ENCODE measurements at regions of chr6 and their contacts with region 1.

Region 1: DNA sequence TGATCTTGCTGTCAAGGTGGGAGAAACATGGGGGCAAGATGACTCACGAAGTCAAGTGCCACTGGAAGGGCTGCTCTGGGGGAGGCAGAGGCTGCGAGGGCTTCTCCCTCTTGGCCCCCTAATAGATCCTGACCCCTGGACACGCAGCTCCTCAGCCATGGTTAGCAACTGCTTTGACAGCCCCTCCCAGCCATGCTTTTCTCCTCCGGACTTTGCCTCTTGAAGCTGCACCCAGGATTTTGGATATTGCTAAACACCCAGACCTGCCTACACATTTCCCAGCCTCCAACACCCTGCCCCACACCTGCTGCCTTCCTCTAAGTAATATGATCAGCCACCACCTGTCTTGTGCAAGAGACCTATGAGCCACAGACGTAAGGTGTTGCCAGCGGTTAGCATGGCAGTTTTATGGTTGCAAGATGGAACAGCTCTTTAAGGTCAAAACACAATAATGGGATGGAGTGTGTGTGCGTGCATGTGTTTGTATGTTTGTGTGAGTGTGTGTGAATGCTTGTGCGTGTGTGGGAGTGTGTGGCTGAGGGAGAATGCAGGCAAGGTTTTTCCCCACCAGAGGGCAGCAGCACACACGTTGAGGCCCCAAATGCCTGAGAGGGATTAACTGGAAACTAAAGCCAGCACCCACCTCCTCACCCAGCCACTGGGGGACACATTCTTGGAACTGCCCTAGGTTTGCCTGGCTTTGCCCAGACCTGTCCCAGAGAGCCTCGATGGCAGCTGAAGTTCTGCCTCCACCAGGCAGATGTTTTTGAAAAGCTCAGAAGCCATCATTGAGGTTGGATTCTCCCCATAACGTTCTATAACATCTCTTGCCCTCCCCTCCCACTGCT is 2.5 kb downstream of the IP6K3 start:
- DNase-seq: peak; percentile 57
- ATAC-seq: peak; percentile 90
- H3K4me3 Mint-ChIP-seq: no peak overlapping the region
- H3K27ac Mint-ChIP-seq: no peak overlapping the region
- H3K4me1 Mint-ChIP-seq: peaks cover 2% of the 10 kb centered on the region
- H3K27me3 Mint-ChIP-seq: peaks cover 21% of the 10 kb centered on the region
- CTCF ChIP-seq: no peak

Region 2: DNA sequence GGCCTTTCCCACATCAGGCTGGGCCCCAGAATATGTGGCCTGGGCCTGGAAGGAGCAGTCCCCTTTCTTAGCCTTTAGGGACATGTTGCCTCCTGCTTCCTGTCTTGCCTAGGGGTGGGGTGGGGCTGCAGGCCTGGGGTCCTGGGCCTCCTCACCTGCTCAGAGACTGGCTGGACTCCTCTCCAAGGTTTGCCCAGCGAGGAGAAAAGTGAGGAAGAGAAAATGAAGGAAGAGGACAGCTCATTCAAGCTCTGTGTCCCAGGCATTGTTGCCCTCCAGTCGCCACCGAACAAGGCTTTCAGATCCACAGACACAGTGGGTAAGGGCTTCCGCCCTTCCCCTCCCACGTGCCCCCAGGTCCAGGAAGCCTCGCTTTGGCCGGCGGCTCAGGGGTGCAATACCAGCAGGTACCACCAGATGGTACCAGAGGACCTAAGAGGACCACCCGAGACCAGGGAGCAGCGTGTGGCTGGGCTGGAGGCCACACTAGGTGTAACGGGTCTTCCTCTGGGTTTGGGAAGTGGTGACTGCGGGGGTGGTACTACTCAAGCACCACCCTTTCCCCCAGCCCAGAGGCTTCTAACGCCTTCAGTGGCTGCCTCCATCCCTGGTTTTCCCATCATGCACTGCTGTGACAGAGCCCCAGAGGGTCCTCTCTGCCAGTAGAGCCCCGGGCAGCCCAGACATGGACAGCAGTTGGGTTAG is 158.7 kb before region 1 on chr6:
- CTCF ChIA-PET with region 1: interaction called, 8 read pairs
- POLR2A ChIA-PET with region 1: no interaction called
- intact Hi-C with region 1: loop called (anchors 1 kb)
- DNase-seq: peak; percentile 90
- ATAC-seq: peak; percentile 94
- H3K4me3 Mint-ChIP-seq: peak overlapping the region; percentile 61
- H3K27ac Mint-ChIP-seq: peak overlapping the region; percentile 93
- H3K4me1 Mint-ChIP-seq: peaks cover 31% of the 10 kb centered on the region
- H3K27me3 Mint-ChIP-seq: no peaks in the 10 kb centered on the region
- CTCF ChIP-seq: peak; percentile 96

Region 3: GRCh38 chr6:33711140-33712129 is 32.8 kb before region 1 on chr6 and contains the start of gene UQCC2:
- CTCF ChIA-PET with region 1: interaction called, 23 read pairs
- POLR2A ChIA-PET with region 1: interaction called, 3 read pairs
- intact Hi-C with region 1: loop called (anchors 1 kb)
- DNase-seq: peak; percentile 93
- ATAC-seq: peak; percentile 86
- H3K4me3 Mint-ChIP-seq: peak within 1 kb of the TSS; percentile 98
- H3K27ac Mint-ChIP-seq: peak within 1 kb of the TSS; percentile 99
- H3K4me1 Mint-ChIP-seq: peaks cover 29% of the 10 kb centered on the region
- H3K27me3 Mint-ChIP-seq: no peaks in the 10 kb centered on the region
- CTCF ChIP-seq: no peak
- total RNA-seq, gene UQCC2: 26.2 and 37.5 TPM in 2 replicates

Region 4: GRCh38 chr6:34027445-34027936 is 283.3 kb after region 1 on chr6:
- CTCF ChIA-PET with region 1: interaction called, 4 read pairs
- POLR2A ChIA-PET with region 1: no interaction called
- intact Hi-C with region 1: loop called (anchors 1 kb)
- DNase-seq: peak; percentile 57
- ATAC-seq: peak; percentile 65
- H3K4me3 Mint-ChIP-seq: no peak overlapping the region
- H3K27ac Mint-ChIP-seq: no peak overlapping the region
- H3K4me1 Mint-ChIP-seq: peaks cover 5% of the 10 kb centered on the region
- H3K27me3 Mint-ChIP-seq: peaks cover 5% of the 10 kb centered on the region
- CTCF ChIP-seq: no peak